ENCODE measurements at regions of chr1 and their contacts with region 1.

Region 1: DNA sequence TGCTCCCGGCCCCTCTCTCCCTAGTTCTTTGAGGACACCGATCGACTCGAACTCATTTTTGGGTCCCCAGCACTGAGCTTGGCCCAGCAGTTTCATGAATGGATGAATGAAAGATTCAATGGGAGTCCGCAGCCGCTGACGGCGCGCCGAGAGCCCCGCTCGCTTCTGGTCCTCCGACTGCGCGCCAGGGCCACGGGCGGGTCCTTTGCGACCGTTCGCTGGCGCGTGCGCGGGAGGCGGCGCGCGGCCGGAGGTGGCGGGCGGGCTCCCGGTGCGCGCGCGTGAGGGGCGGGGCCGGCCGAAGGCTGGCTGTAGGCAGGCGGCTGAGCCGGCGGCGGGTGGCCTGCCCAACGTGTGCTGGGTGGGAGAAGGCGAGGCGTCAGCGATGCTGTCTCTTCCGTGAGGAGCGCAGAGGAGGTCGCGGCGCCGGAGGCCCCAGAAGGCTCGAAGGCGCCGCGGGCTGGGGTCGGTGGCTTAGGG is at the start of gene MAST2:
- DNase-seq: peak; percentile 78 to 91
- H3K4me3 ChIP-seq: peak within 1 kb of the TSS; percentile 59
- H3K4me3 Mint-ChIP-seq: peak within 1 kb of the TSS; percentile 98
- H3K27ac Mint-ChIP-seq: peak within 1 kb of the TSS; percentile 56
- H3K4me1 ChIP-seq: peaks cover 10% of the 10 kb centered on the region; the same call in 1 of the 2 replicates
- H3K4me1 Mint-ChIP-seq: peaks cover 24% of the 10 kb centered on the region
- H3K27me3 ChIP-seq: no peaks in the 10 kb centered on the region
- H3K27me3 Mint-ChIP-seq: no peaks in the 10 kb centered on the region
- CTCF ChIP-seq: no peak
- total RNA-seq, gene MAST2: 43.3 and 49.6 TPM in 2 replicates

Region 2: DNA sequence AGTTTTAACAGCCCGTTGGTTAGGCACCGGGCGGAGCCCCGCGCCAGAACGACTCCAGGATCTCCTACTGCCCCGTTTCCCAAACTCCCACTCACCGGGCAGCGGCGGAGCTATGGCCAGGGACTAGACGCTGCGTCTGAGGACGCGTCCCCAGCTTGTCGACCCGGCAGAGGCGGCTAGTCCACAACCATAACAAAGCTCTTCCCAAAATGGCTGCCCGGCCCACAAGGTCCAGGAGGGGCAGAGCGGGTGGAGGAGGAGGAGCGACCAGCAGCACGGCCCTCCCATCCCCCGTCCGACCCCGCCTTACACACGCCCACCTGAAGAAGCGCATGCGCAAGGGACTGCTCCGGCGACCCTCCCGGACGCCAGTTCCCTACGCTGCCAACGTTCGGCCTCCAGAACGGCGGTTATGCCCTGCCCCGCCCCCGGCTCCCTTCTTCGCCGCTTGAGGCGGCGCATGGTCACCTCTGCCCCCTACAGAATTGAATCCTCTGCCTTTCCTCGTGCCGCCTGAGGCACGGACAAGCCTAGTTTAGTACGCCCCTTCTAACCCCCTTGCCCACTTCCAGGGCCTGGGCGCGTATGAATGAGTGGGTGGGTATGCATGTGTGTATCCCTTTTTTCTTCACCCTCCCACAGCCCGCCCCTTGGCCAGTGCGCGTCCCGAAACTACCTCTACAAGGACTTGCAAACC is 116.9 kb before region 1 on chr1 and contains the start of gene GPBP1L1:
- CTCF ChIA-PET with region 1: no interaction called
- POLR2A ChIA-PET with region 1: interaction called, 4 read pairs
- intact Hi-C with region 1: loop called (anchors 2 kb)
- DNase-seq: peak; percentile 95 to 97
- H3K4me3 ChIP-seq: peak within 1 kb of the TSS; percentile 77
- H3K4me3 Mint-ChIP-seq: peak within 1 kb of the TSS; percentile 84
- H3K27ac Mint-ChIP-seq: peak within 1 kb of the TSS; percentile 86
- H3K4me1 ChIP-seq: no peaks in the 10 kb centered on the region; the same call in 1 of the 2 replicates
- H3K4me1 Mint-ChIP-seq: no peaks in the 10 kb centered on the region
- H3K27me3 ChIP-seq: no peaks in the 10 kb centered on the region
- H3K27me3 Mint-ChIP-seq: no peaks in the 10 kb centered on the region
- CTCF ChIP-seq: no peak
- total RNA-seq, gene GPBP1L1: 57.3 and 61.8 TPM in 2 replicates

Region 3: GRCh38 chr1:45750298-45751038 is 52.9 kb before region 1 on chr1 and contains the start of gene IPP:
- CTCF ChIA-PET with region 1: no interaction called
- POLR2A ChIA-PET with region 1: no interaction called
- intact Hi-C with region 1: loop called (anchors 5 kb)
- DNase-seq: peak; percentile 96 to 97
- H3K4me3 ChIP-seq: peak within 1 kb of the TSS; percentile 53
- H3K4me3 Mint-ChIP-seq: peak within 1 kb of the TSS; percentile 94
- H3K27ac Mint-ChIP-seq: peak within 1 kb of the TSS; percentile 98
- H3K4me1 ChIP-seq: no peaks in the 10 kb centered on the region
- H3K4me1 Mint-ChIP-seq: no peaks in the 10 kb centered on the region
- H3K27me3 ChIP-seq: no peaks in the 10 kb centered on the region
- H3K27me3 Mint-ChIP-seq: no peaks in the 10 kb centered on the region
- CTCF ChIP-seq: peak in 1 of 2 experiments; percentile 17
- total RNA-seq, gene IPP: 7.6 and 7.9 TPM in 2 replicates

Region 4: GRCh38 chr1:45843474-45843905 is 40.1 kb after region 1 on chr1:
- CTCF ChIA-PET with region 1: no interaction called
- POLR2A ChIA-PET with region 1: no interaction called
- intact Hi-C with region 1: loop called (anchors 5 kb)
- DNase-seq: no peak
- H3K4me3 ChIP-seq: no peak overlapping the region
- H3K4me3 Mint-ChIP-seq: no peak overlapping the region
- H3K27ac Mint-ChIP-seq: no peak overlapping the region
- H3K4me1 ChIP-seq: peaks cover 16% of the 10 kb centered on the region
- H3K4me1 Mint-ChIP-seq: peaks cover 19% of the 10 kb centered on the region
- H3K27me3 ChIP-seq: no peaks in the 10 kb centered on the region
- H3K27me3 Mint-ChIP-seq: no peaks in the 10 kb centered on the region
- CTCF ChIP-seq: no peak

Measured in Caco-2 (cell line).